ENCODE measurements at regions of chr4 and their contacts with region 1.

Region 1: GRCh38 chr4:163484906-163485305 is 9.6 kb upstream of the TMA16 start:
- DNase-seq: no peak

Region 2: GRCh38 chr4:162622664-162623063 is 862.2 kb before region 1 on chr4:
- intact Hi-C with region 1: no loop called
- DNase-seq: no peak

Region 3: DNA sequence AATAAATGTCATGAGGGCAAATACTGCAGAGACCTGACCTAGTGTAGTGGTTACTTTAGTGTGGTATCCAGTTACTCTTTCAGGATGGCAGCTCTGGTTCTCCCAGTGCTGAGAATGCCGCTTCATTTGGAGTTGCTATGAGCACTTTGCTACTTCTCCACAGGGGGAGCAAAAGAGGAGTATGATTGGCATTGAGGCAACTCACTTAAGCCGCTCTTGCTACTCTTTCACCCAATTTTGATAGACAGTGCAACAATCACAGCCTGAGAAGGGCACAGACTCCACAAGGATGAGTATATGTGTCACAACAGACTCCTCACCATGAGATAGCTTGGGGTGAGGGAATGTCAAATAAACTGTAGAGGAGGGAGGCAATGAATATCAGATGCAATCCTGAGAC is 233.7 kb before region 1 on chr4:
- intact Hi-C with region 1: no loop called
- DNase-seq: no peak

Region 4: DNA sequence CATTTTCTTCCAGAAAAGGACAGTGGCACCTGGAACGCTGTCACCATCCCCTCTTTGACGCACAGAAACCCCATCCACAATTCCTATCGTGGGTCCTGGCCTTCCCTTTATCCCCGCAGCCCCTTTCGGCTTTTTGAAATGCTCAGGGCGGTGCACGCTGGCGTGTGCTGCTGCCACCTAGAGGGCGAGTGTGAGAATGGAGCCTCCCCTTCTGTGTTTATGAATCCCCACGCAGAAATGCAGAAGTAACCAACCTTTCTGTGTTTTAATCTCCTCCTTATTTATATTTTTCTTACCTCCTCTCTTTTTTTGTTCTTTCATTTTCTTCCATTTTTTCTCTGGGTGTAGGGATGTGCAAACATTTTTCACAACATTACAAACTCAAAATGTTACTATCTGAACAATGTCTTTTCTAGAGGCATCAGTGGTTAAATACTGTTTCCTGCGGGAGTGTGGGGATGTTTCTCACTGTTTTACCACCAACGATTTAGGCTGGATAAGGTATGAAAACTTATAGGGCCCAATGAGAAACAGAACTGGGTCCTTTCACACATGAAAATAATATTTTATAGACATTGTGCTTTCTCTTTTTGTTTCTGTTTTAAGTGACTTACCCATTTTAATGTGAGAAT is 59.6 kb after region 1 on chr4:
- intact Hi-C with region 1: loop called (anchors 2 to 10 kb)
- DNase-seq: peak; percentile 84